ENCODE measurements at regions of chr2 and their contacts with region 1.

Region 1: GRCh38 chr2:217610401-217611075 is 392.3 kb downstream of the TNS1 start:
- DNase-seq: peak; percentile 11 to 75 (median 57)
- ATAC-seq: peak; percentile 75
- H3K4me3 ChIP-seq: peak overlapping the region; percentile 33
- H3K4me3 Mint-ChIP-seq: peak overlapping the region; percentile 33 to 78 (median 66)
- H3K27ac ChIP-seq: peak overlapping the region; percentile 68
- H3K27ac Mint-ChIP-seq: peak overlapping the region; percentile 76 to 98 (median 92)
- H3K4me1 ChIP-seq: peaks cover 8 to 35% of the 10 kb centered on the region in 2 donors
- H3K4me1 Mint-ChIP-seq: peaks cover 13 to 75% (median 63%) of the 10 kb centered on the region in 7 donors
- H3K27me3 ChIP-seq: no peaks in the 10 kb centered on the region
- H3K27me3 Mint-ChIP-seq: no peaks in the 10 kb centered on the region

Region 2: DNA sequence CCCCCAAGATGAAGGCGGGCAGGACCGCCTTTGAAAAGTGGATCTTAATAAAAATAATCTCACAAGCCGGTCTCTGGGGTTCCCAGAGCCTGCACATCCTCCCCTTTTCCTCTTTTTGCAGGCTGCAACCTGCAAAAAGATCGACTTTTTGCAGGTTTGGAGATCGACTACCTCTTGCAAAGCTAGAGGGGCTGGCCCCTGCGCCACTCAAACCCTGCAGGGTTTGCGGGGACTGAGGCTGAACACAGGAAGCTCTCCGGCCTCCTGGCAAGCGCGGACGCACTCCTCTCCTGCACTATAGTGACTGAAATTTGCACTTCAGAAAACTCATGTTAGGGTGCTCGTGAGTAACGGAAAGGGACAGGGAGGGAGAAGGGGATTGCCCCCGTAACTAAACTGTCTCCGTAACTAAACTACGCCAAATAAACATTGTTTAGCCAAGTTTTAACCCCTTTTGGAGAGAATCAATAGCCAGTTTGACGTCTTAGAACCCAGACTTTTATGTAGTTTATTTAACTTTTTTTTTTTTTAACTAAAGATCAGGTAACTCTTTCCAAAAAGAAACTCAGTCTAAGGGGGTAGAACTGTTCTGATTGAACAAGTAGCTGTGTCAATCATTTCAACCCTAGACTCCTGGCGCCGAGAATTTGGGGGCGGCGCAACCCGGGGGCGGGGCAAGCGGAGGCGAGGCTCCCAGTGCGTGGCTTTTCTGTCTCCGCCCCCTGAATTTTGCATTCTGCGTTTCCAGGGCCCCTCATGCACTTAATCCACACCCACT is 917.7 kb before region 1 on chr2:
- CTCF ChIA-PET with region 1: no interaction called
- POLR2A ChIA-PET with region 1: no interaction called
- intact Hi-C with region 1: loop called in 1 of 2 experiments (anchors 5 kb)
- DNase-seq: peak; percentile 31 to 71 (median 59)
- ATAC-seq: peak; percentile 63
- H3K4me3 ChIP-seq: peak overlapping the region; percentile 50
- H3K4me3 Mint-ChIP-seq: peak overlapping the region; percentile 82 to 92 (median 86)
- H3K27ac ChIP-seq: peak overlapping the region; percentile 57
- H3K27ac Mint-ChIP-seq: peak overlapping the region in 7 of 9 donors; percentile 33 to 95 (median 83)
- H3K4me1 ChIP-seq: peaks cover 10 to 28% of the 10 kb centered on the region in 2 donors
- H3K4me1 Mint-ChIP-seq: peaks cover 12 to 49% (median 37%) of the 10 kb centered on the region in 7 donors
- H3K27me3 ChIP-seq: peaks cover 3 to 10% of the 10 kb centered on the region in 2 donors
- H3K27me3 Mint-ChIP-seq: peaks cover 36 to 78% (median 72%) of the 10 kb centered on the region in 5 donors

Region 3: DNA sequence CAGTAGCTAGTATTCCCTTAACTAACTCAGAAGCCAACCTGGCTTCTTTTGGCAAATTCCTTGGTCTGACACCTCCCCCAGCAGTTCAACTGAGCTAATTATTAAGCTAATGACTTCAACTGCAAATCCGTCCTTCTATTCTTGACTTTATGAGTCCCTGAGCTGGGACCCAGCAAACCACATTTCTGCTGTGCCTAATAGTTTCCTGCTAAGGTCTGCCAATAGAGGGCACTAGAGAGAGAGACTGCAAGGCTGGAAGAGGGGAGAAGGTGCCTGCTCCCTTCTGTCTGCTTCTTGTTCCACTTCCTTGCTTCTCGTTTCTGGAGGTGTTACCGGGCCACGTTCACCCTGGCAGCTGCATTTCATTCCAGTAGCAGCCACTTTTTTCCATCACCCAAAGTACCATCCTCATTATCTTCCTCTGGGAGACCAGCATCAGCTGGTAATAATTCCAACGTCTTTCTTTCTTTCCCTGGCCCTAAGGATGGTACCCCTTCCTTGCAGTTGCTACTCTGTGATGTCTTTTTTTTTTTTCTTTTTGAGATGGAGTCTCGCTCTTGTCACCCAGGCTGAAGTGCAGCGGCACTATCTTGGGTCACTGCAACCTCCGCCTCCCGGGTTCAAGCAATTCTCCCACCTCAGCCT is 40.3 kb after region 1 on chr2:
- CTCF ChIA-PET with region 1: interaction called, 3 read pairs
- POLR2A ChIA-PET with region 1: no interaction called
- intact Hi-C with region 1: loop called in 1 of 2 experiments (anchors 1 kb)
- DNase-seq: peak in 5 of 9 donors; percentile 23 to 42 (median 24)
- ATAC-seq: peak; percentile 56
- H3K4me3 ChIP-seq: no peak overlapping the region
- H3K4me3 Mint-ChIP-seq: no peak overlapping the region
- H3K27ac ChIP-seq: no peak overlapping the region
- H3K27ac Mint-ChIP-seq: peak overlapping the region in 1 of 9 donors; percentile 43
- H3K4me1 ChIP-seq: no peaks in the 10 kb centered on the region
- H3K4me1 Mint-ChIP-seq: peaks cover 0 to 7% (median 2%) of the 10 kb centered on the region in 7 donors
- H3K27me3 ChIP-seq: no peaks in the 10 kb centered on the region
- H3K27me3 Mint-ChIP-seq: no peaks in the 10 kb centered on the region